Endothelial cell of umbilical vein (primary cell): ENCODE measurements at regions of chr1 and their contacts with region 1.

Region 1: GRCh38 chr1:151539990-151540981 is at the start of gene TUFT1:
- DNase-seq: peak; percentile 92
- H3K4me3 ChIP-seq: peak within 1 kb of the TSS; percentile 76 to 81 (median 78)
- H3K27ac ChIP-seq: peak within 1 kb of the TSS; percentile 33
- H3K4me1 ChIP-seq: peaks cover 11% of the 10 kb centered on the region
- H3K27me3 ChIP-seq: no peaks in the 10 kb centered on the region
- CTCF ChIP-seq: no peak
- POLR2A ChIP-seq: peak; percentile 97
- total RNA-seq, gene TUFT1: 4.3 TPM in 2 replicates

Region 2: DNA sequence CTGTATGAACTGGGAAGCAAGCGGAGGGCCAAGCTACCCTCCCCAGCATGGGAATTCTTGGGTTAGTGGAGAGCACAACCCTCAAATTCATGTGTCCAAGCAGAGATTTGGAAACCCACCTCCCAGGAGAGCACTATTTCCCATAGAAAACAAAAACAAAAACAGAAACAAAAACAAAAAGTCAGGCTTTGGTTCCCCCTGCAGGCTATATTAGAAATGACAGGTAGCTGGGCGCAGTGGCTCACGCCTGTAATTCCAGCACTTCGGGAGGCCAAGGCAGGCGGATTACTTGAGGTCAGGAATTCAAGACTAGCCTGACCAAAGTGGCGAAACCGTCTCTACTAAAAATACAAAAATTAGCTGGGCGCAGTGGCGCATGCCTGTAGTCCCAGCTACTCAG is 544.4 kb before region 1 on chr1:
- CTCF ChIA-PET with region 1: no interaction called
- POLR2A ChIA-PET with region 1: no interaction called
- dilution Hi-C with region 1: no loop called
- intact Hi-C with region 1: no loop called
- DNase-seq: no peak
- H3K4me3 ChIP-seq: no peak overlapping the region
- H3K27ac ChIP-seq: no peak overlapping the region
- H3K4me1 ChIP-seq: peaks cover 11% of the 10 kb centered on the region
- H3K27me3 ChIP-seq: no peaks in the 10 kb centered on the region
- CTCF ChIP-seq: peak; percentile 57 to 68
- POLR2A ChIP-seq: no peak

Region 3: GRCh38 chr1:151511636-151512215 is 28.6 kb before region 1 on chr1:
- CTCF ChIA-PET with region 1: no interaction called
- POLR2A ChIA-PET with region 1: no interaction called
- dilution Hi-C with region 1: no loop called
- intact Hi-C with region 1: no loop called
- DNase-seq: no peak
- H3K4me3 ChIP-seq: peak overlapping the region; percentile 29 to 44 (median 38)
- H3K27ac ChIP-seq: no peak overlapping the region
- H3K4me1 ChIP-seq: peaks cover 12% of the 10 kb centered on the region
- H3K27me3 ChIP-seq: peaks cover 0 to 2% of the 10 kb centered on the region in 2 experiments
- CTCF ChIP-seq: peak in 1 of 2 donors; percentile 3
- POLR2A ChIP-seq: no peak

Region 4: DNA sequence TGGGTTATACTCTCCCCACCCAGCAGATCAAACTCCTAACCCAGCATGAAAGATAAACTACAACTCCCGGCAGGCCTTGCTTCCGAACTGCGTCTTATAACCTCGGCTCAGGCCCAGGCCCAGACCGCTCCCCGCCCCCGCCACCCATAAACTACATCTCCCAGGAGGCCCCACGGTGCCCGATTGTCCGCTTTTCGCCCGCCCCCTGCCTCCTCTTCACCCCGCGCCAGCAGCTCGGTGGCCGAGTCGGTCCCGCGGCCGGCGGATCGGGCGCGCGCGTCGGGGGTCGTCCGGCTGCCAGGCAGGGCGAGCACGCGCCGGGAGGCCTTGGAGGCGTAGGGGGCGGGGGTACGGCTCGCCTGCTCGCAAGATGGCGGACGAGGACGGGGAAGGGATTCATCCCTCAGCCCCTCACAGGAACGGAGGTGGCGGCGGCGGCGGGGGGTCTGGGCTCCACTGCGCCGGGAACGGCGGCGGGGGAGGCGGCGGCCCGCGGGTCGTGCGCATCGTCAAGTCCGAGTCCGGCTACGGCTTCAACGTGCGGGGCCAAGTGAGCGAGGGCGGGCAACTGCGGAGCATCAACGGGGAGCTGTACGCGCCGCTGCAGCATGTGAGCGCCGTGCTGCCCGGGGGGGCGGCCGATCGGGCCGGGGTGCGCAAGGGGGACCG is 71.7 kb after region 1 on chr1 and contains the start of gene SNX27:
- CTCF ChIA-PET with region 1: no interaction called
- POLR2A ChIA-PET with region 1: no interaction called
- dilution Hi-C with region 1: no loop called
- intact Hi-C with region 1: loop called (anchors 5 kb)
- DNase-seq: peak; percentile 95
- H3K4me3 ChIP-seq: peak within 1 kb of the TSS; percentile 83 to 93 (median 84)
- H3K27ac ChIP-seq: peak within 1 kb of the TSS; percentile 41
- H3K4me1 ChIP-seq: peaks cover 8% of the 10 kb centered on the region
- H3K27me3 ChIP-seq: no peaks in the 10 kb centered on the region
- CTCF ChIP-seq: no peak
- POLR2A ChIP-seq: peak; percentile 30
- total RNA-seq, gene SNX27: 24.5 and 24.9 TPM in 2 replicates

Region 5: DNA sequence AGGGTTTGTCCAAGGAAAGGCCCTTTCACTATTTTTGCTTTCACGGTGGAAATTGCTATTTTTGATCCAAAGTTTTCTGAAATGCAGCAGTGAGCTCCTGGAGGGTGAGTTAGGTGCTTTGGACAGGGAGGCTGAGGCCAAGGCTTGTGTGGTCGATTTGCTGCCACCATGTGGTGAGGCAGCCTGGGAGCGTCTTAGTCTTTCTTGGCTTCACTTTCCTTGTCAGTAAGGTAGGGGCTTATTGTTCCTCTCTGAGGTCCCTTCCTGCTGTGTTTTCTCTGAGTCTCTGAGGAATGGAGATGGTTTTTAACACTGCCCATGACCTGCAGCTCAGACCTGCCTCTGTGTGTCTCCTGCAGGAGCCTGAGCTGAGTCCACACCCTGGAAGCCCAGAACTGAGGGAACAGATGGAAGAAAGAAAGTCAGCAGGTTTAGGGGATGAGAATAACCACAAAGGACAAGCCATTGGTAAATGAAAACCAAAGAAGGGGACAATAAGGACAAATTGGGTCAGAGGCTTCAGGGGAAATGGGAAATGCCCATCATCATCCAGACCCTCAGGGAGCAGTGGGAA is 473.5 kb after region 1 on chr1:
- CTCF ChIA-PET with region 1: no interaction called
- POLR2A ChIA-PET with region 1: no interaction called
- dilution Hi-C with region 1: no loop called
- intact Hi-C with region 1: loop called (anchors 10 kb)
- DNase-seq: peak; percentile 48
- H3K4me3 ChIP-seq: no peak overlapping the region
- H3K27ac ChIP-seq: no peak overlapping the region
- H3K4me1 ChIP-seq: no peaks in the 10 kb centered on the region
- H3K27me3 ChIP-seq: peaks cover 10 to 36% of the 10 kb centered on the region in 2 experiments
- CTCF ChIP-seq: peak; percentile 63 to 81
- POLR2A ChIP-seq: no peak